ENCODE measurements at regions of chr6 and their contacts with region 1.

Region 1: GRCh38 chr6:103122766-103123601 is 1729.5 kb downstream of the GRIK2 start:
- DNase-seq: no peak
- ATAC-seq: peak; percentile 98
- H3K4me3 ChIP-seq: no peak overlapping the region
- H3K27ac ChIP-seq: no peak overlapping the region
- H3K4me1 ChIP-seq: no peaks in the 10 kb centered on the region
- H3K27me3 ChIP-seq: no peaks in the 10 kb centered on the region
- CTCF ChIP-seq: peak; percentile 46 to 64 (median 62)
- EP300 ChIP-seq: no peak
- POLR2A ChIP-seq: no peak
- RAD21 ChIP-seq: peak; percentile 68

Region 2: DNA sequence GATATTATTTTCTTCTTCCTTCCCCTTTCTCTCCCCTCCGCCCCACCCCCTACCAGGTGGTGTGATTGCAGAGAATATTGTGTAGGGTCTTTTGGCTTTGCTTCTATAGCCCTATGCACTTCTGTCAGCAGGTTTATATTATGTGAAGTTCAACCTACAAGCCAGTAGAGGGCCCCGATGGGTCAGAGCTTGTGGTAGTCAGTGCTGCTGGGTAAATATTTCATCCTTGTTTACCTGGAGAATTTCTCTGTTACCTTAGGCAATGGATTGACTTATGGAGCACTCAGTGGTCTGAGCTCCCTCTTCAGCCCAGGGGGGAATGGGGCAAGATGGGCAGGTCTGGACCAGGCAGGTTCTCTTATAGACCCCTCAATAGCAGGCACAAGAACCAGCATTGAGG is 1008.6 kb before region 1 on chr6:
- CTCF ChIA-PET with region 1: interaction called, 3 read pairs
- POLR2A ChIA-PET with region 1: no interaction called
- RAD21 ChIA-PET with region 1: no interaction called
- SMC1A ChIA-PET with region 1: no interaction called
- in situ Hi-C with region 1: no loop called
- intact Hi-C with region 1: loop called (anchors 10 kb)
- DNase-seq: no peak
- ATAC-seq: peak; percentile 91
- H3K4me3 ChIP-seq: no peak overlapping the region
- H3K27ac ChIP-seq: no peak overlapping the region
- H3K4me1 ChIP-seq: no peaks in the 10 kb centered on the region
- H3K27me3 ChIP-seq: no peaks in the 10 kb centered on the region
- CTCF ChIP-seq: peak; percentile 12 to 52 (median 44); a peak in 3 of 6 replicates
- EP300 ChIP-seq: no peak
- POLR2A ChIP-seq: no peak
- RAD21 ChIP-seq: peak; percentile 48; the same call in 1 of the 2 replicates

Region 3: GRCh38 chr6:102853269-102853955 is 269.6 kb before region 1 on chr6:
- CTCF ChIA-PET with region 1: interaction called, 77 read pairs
- POLR2A ChIA-PET with region 1: no interaction called
- RAD21 ChIA-PET with region 1: interaction called, 55 read pairs
- SMC1A ChIA-PET with region 1: interaction called, 47 read pairs
- in situ Hi-C with region 1: no loop called
- intact Hi-C with region 1: loop called (anchors 1 kb)
- DNase-seq: no peak
- ATAC-seq: no peak
- H3K4me3 ChIP-seq: no peak overlapping the region
- H3K27ac ChIP-seq: no peak overlapping the region
- H3K4me1 ChIP-seq: no peaks in the 10 kb centered on the region
- H3K27me3 ChIP-seq: no peaks in the 10 kb centered on the region
- CTCF ChIP-seq: no peak
- EP300 ChIP-seq: no peak
- POLR2A ChIP-seq: no peak
- RAD21 ChIP-seq: no peak

Region 4: DNA sequence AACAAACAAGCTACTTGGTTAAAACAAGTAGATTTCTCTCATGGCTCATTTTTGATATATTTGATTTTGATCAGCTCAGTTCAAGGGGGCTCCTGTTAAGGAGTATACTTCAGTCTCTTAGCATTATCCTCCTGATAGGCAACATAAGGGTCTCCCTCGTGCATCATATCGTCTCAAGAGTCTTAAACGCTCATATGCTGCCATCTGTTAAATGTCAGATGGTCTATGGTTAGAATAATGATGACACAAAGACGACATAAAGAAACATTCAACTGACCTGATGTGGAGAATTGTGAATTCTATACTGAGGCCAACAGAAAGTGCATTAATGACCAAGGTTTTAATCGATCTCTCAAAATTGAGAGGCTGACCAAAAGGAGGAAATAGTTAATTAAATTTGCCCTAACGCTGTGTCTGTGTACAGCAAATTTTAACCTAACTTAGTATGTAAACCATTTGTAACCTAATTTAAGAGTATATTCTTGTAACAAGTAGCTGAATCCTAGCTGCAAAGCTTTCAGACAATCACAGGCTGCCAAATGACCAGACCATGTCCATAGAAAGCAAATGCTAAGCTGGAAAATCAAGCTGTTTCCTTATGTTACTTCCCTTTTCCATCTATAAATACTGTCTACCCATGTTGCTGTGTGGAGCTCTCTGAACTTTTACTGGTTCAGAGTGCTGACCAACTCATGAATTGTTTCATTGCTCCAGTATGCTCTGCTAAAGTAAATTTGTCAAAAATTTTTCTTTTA is 40.9 kb before region 1 on chr6:
- CTCF ChIA-PET with region 1: interaction called, 6 read pairs
- POLR2A ChIA-PET with region 1: no interaction called
- RAD21 ChIA-PET with region 1: interaction called, 12 read pairs
- SMC1A ChIA-PET with region 1: interaction called, 7 read pairs
- in situ Hi-C with region 1: no loop called
- intact Hi-C with region 1: no loop called
- DNase-seq: no peak
- ATAC-seq: no peak
- H3K4me3 ChIP-seq: no peak overlapping the region
- H3K27ac ChIP-seq: no peak overlapping the region
- H3K4me1 ChIP-seq: no peaks in the 10 kb centered on the region
- H3K27me3 ChIP-seq: no peaks in the 10 kb centered on the region
- CTCF ChIP-seq: no peak
- EP300 ChIP-seq: no peak
- POLR2A ChIP-seq: no peak
- RAD21 ChIP-seq: no peak

Region 5: GRCh38 chr6:103107985-103108384 is 15.0 kb before region 1 on chr6:
- CTCF ChIA-PET with region 1: interaction called, 12 read pairs
- POLR2A ChIA-PET with region 1: no interaction called
- RAD21 ChIA-PET with region 1: interaction called, 3 read pairs
- SMC1A ChIA-PET with region 1: interaction called, 9 read pairs
- in situ Hi-C with region 1: no loop called
- intact Hi-C with region 1: no loop called
- DNase-seq: no peak
- ATAC-seq: no peak
- H3K4me3 ChIP-seq: no peak overlapping the region
- H3K27ac ChIP-seq: no peak overlapping the region
- H3K4me1 ChIP-seq: no peaks in the 10 kb centered on the region
- H3K27me3 ChIP-seq: no peaks in the 10 kb centered on the region
- CTCF ChIP-seq: no peak
- EP300 ChIP-seq: no peak
- POLR2A ChIP-seq: no peak
- RAD21 ChIP-seq: no peak

Region 6: DNA sequence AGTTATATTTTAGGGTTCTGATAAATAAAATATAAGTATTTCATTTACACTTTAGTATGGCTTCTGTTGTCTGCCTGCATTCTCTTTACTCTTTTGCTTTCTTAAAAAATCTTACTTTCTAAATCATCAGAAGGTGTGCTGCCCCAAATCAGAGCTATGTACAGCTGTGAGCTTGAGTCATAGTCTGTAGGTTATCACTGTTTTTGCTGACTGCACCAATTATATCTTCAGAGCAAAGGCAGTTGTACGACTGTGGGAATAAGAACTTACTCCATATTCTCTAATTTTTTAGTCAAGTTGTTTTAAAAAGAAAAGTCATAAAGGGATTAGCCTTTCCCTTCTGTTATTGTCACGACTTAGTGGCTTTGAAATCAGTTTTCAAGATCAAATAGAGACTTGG is 87.7 kb after region 1 on chr6:
- CTCF ChIA-PET with region 1: interaction called, 13 read pairs
- POLR2A ChIA-PET with region 1: no interaction called
- RAD21 ChIA-PET with region 1: interaction called, 4 read pairs
- SMC1A ChIA-PET with region 1: interaction called, 7 read pairs
- in situ Hi-C with region 1: no loop called
- intact Hi-C with region 1: no loop called
- DNase-seq: no peak
- ATAC-seq: peak; percentile 69
- H3K4me3 ChIP-seq: no peak overlapping the region
- H3K27ac ChIP-seq: no peak overlapping the region
- H3K4me1 ChIP-seq: no peaks in the 10 kb centered on the region
- H3K27me3 ChIP-seq: no peaks in the 10 kb centered on the region
- CTCF ChIP-seq: no peak
- EP300 ChIP-seq: no peak
- POLR2A ChIP-seq: no peak
- RAD21 ChIP-seq: no peak

Region 7: GRCh38 chr6:103273048-103273447 is 150.1 kb after region 1 on chr6:
- CTCF ChIA-PET with region 1: interaction called, 73 read pairs
- POLR2A ChIA-PET with region 1: no interaction called
- RAD21 ChIA-PET with region 1: interaction called, 32 read pairs
- SMC1A ChIA-PET with region 1: interaction called, 30 read pairs
- in situ Hi-C with region 1: no loop called
- intact Hi-C with region 1: loop called (anchors 5 kb)
- DNase-seq: no peak
- ATAC-seq: peak; percentile 84
- H3K4me3 ChIP-seq: no peak overlapping the region
- H3K27ac ChIP-seq: no peak overlapping the region
- H3K4me1 ChIP-seq: no peaks in the 10 kb centered on the region
- H3K27me3 ChIP-seq: no peaks in the 10 kb centered on the region
- CTCF ChIP-seq: peak in 2 of 3 experiments; percentile 37 to 48; a peak in 3 of 6 replicates
- EP300 ChIP-seq: no peak
- POLR2A ChIP-seq: no peak
- RAD21 ChIP-seq: peak; percentile 34; the same call in 1 of the 2 replicates

Region 8: GRCh38 chr6:103379272-103379671 is 256.3 kb after region 1 on chr6:
- CTCF ChIA-PET with region 1: no interaction called
- POLR2A ChIA-PET with region 1: no interaction called
- RAD21 ChIA-PET with region 1: no interaction called
- SMC1A ChIA-PET with region 1: no interaction called
- in situ Hi-C with region 1: no loop called
- intact Hi-C with region 1: no loop called
- DNase-seq: no peak
- ATAC-seq: no peak
- H3K4me3 ChIP-seq: no peak overlapping the region
- H3K27ac ChIP-seq: no peak overlapping the region
- H3K4me1 ChIP-seq: no peaks in the 10 kb centered on the region
- H3K27me3 ChIP-seq: no peaks in the 10 kb centered on the region
- CTCF ChIP-seq: no peak
- EP300 ChIP-seq: no peak
- POLR2A ChIP-seq: no peak
- RAD21 ChIP-seq: no peak